ENCODE measurements at regions of chr11 and their contacts with region 1.

Region 1: GRCh38 chr11:65418711-65419459 is 3.7 kb upstream of the NEAT1 start:
- DNase-seq: peak; percentile 98
- H3K4me3 ChIP-seq: peak overlapping the region; percentile 73
- H3K27ac ChIP-seq: peak overlapping the region; percentile 97
- H3K4me1 ChIP-seq: peaks cover 70% of the 10 kb centered on the region
- CTCF ChIP-seq: no peak

Region 2: DNA sequence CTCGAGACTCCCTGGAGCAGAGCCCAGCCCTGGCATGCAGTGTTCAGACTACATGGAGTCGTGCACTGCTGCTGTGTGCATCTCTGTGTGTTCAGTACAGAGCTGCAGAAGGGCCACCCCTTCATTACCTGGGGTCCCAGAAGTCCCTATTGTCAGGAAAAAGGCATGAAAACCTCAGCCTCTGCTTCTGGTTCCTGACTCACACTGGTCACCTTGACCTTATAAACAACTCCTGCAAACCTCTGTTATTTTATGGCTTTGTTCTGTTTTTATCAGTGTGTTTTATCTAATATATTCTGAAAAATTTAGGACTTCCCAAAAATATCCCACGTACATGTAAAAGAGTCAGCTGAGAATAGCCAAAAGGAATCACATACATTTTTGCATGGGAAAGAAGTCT is 912.2 kb before region 1 on chr11:
- CTCF ChIA-PET with region 1: no interaction called
- POLR2A ChIA-PET with region 1: no interaction called
- intact Hi-C with region 1: no loop called
- DNase-seq: no peak
- H3K4me3 ChIP-seq: no peak overlapping the region
- H3K27ac ChIP-seq: no peak overlapping the region
- H3K4me1 ChIP-seq: no peaks in the 10 kb centered on the region
- CTCF ChIP-seq: no peak

Region 3: DNA sequence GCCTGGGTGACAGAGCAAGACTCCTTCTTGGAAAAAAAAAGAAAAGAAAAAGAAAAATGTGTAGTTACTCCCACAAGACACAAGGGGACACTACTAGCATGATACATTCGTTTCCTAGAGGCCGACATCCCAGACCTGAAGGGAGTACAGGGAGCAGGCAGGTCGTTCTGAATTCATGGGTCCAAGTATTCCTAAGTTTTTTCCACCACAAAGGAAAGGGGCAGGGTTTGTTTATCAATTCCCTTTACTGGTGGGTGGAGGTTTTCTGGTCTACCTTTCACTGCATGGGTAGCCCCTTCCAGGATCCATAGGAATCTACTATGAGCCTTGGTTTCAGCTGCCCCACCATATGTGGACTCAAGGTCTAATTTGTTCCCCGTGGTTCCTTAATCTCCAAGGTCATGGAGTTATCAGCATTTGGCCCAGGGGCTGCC is 52.5 kb before region 1 on chr11:
- CTCF ChIA-PET with region 1: no interaction called
- POLR2A ChIA-PET with region 1: no interaction called
- intact Hi-C with region 1: loop called (anchors 5 kb)
- DNase-seq: peak; percentile 80
- H3K4me3 ChIP-seq: no peak overlapping the region
- H3K27ac ChIP-seq: no peak overlapping the region
- H3K4me1 ChIP-seq: peaks cover 16% of the 10 kb centered on the region
- CTCF ChIP-seq: peak; percentile 79

Region 4: GRCh38 chr11:65432686-65433582 is 14.0 kb after region 1 on chr11:
- CTCF ChIA-PET with region 1: interaction called, 3 read pairs
- POLR2A ChIA-PET with region 1: interaction called, 18 read pairs
- intact Hi-C with region 1: loop called (anchors 1 kb)
- DNase-seq: peak; percentile 72
- H3K4me3 ChIP-seq: no peak overlapping the region
- H3K27ac ChIP-seq: peak overlapping the region; percentile 97
- H3K4me1 ChIP-seq: peaks cover 89% of the 10 kb centered on the region
- CTCF ChIP-seq: peak; percentile 84

Region 5: DNA sequence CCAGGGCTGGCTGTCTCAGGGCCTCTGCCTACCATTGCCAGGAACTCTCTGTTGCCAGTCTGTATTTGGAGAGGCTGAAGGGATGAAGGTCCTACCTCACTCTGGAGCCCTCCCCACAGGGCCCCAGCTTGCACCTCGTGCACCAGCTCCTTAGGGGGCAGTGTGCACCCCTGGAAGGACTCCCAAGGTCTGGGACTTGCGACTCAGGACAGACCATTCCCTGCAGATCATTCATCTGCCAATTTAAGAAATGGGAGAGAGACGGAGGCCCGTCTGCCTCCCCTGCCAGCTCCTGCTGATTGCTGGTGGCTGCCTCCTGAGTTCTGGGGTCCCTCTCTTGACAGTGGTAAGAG is 52.5 kb after region 1 on chr11:
- CTCF ChIA-PET with region 1: interaction called, 6 read pairs
- POLR2A ChIA-PET with region 1: interaction called, 4 read pairs
- intact Hi-C with region 1: loop called (anchors 1 kb)
- DNase-seq: peak; percentile 74
- H3K4me3 ChIP-seq: peak overlapping the region; percentile 54
- H3K27ac ChIP-seq: peak overlapping the region; percentile 53
- H3K4me1 ChIP-seq: peaks cover 40% of the 10 kb centered on the region
- CTCF ChIP-seq: peak; percentile 82

Region 6: DNA sequence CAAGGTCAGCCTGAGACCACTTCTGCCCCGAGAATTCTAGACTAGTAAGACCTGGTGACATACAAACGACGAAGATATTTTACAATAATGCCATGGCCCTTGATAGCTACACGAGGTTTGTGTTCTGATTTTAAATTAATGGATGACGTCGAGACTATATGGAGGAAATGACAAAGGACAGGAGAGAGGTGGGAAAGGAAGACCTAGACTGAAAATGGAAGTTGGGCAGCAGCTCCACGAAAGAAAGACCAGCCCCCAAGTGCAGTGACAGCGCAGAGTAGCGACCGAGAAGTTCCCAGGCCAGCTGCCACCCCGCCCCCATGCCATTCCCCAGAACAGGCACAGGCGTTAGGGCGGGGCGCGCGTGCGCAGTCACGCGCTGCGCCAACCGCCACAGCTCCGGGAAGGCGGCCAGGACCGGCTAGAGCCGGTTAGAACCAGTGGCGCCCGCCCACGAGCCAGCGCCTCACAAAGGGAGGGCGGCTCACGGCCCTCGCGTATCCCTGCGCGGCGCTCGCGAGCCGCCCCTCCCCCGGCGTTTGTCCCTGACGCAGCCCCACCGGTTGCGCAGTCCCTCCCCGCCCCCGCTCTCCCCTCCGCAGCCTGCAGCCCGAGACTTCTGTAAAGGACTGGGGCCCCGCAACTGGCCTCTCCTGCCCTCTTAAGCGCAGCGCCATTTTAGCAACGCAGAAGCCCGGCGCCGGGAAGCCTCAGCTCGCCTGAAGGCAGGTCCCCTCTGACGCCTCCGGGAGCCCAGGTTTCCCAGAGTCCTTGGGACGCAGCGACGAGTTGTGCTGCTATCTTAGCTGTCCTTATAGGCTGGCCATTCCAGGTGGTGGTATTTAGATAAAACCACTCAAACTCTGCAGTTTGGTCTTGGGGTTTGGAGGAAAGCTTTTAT is 78.5 kb after region 1 on chr11:
- CTCF ChIA-PET with region 1: interaction called, 5 read pairs
- POLR2A ChIA-PET with region 1: interaction called, 237 read pairs
- intact Hi-C with region 1: loop called (anchors 1 kb)
- DNase-seq: peak; percentile 99
- H3K4me3 ChIP-seq: peak overlapping the region; percentile 79
- H3K27ac ChIP-seq: peak overlapping the region; percentile 98
- H3K4me1 ChIP-seq: peaks cover 52% of the 10 kb centered on the region
- CTCF ChIP-seq: no peak

Measured in OCI-LY7 (cell line).